ENCODE measurements at regions of chr11 and their contacts with region 1.

Region 1: DNA sequence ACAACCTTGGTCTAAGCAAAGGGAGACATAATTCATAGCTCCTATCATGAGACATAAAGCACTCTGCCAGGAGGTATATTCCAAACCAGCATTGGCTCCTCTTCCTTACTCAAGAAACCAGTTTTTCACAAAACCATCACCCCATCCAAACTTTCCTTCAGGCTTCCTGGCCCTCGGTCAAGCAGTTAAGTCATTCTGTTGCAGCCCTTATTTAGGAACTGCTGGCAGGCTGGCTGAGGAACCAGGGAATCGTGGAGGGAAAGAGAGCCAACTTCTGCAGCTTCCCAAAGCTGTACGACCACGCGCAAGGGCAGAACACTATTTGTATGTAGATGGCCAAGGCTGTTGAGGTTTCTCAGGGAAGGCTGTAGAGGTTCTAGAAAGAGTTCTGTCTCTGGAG is 680 bp downstream of the IFT46 start:
- DNase-seq: no peak
- H3K4me3 ChIP-seq: peak overlapping the region; percentile 35 to 58 (median 53)
- H3K27ac ChIP-seq: peak overlapping the region; percentile 80 to 85 (median 81)
- H3K4me1 ChIP-seq: peaks cover 0 to 18% (median 15%) of the 10 kb centered on the region in 4 donors
- H3K27me3 ChIP-seq: no peaks in the 10 kb centered on the region
- CTCF ChIP-seq: no peak
- EP300 ChIP-seq: no peak
- POLR2A ChIP-seq: no peak

Region 2: DNA sequence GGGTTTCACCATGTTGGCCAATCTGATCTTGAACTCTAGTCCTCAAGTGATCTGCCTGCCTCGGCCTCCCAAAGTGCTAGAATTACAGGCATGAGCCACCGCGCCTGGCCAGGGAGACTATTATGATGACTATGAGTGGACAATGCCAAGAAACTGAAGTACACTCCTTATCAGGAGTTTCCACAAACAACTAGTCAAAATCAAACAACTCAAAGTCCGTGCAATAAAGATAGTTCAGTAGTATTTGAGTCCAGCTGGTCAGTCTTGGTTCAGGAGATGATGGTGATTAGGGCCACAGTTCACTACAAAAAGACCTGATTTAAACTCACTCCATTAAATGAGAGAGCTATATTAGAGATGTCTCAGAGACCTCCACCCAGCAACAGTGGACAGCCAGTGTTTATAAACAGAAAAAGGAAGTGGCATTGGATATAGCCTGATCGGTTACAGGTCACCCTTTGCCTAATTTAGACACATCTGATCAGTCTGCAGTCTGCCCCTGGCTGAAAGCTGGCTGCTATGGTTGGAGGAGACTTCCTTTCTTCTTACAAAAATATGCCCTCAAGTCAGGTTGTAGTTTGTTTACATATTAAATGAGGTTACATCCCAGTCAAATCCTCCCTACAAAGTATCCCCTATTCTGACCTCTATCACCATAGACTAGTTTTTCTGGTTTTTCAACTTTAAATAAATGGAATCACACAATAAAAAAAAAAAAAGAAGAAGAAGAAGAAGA is 243.5 kb before region 1 on chr11:
- intact Hi-C with region 1: no loop called
- DNase-seq: no peak
- H3K4me3 ChIP-seq: no peak overlapping the region
- H3K27ac ChIP-seq: no peak overlapping the region
- H3K4me1 ChIP-seq: peaks cover 0 to 4% (median 2%) of the 10 kb centered on the region in 4 donors
- H3K27me3 ChIP-seq: peaks cover 0 to 13% (median 0%) of the 10 kb centered on the region in 3 donors
- CTCF ChIP-seq: no peak
- EP300 ChIP-seq: no peak
- POLR2A ChIP-seq: no peak

Region 3: DNA sequence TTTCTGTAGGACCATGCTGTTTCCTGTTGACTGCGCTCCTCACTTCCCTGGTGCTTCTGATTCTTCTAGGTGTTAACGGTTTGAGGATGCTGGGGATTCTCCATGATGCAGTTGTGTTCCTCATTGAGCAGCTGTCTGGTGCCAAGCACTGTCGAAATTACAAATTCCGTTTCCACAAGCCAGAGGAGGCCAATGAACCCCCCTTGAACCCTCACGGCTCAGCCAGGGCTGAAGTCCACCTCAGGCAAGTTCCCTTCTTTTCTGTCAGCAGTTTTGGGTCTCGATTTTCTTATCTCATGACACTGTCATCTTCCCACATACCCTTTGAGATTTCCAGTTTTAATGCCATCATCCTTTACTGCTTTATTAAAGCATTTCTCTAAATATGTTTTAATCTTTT is 45.5 kb before region 1 on chr11:
- intact Hi-C with region 1: no loop called
- DNase-seq: no peak
- H3K4me3 ChIP-seq: no peak overlapping the region
- H3K27ac ChIP-seq: no peak overlapping the region
- H3K4me1 ChIP-seq: peaks cover 0 to 6% (median 3%) of the 10 kb centered on the region in 4 donors
- H3K27me3 ChIP-seq: no peaks in the 10 kb centered on the region
- CTCF ChIP-seq: no peak
- EP300 ChIP-seq: no peak
- POLR2A ChIP-seq: no peak

Region 4: GRCh38 chr11:118531340-118532084 is 33.5 kb before region 1 on chr11:
- intact Hi-C with region 1: loop called (anchors 2 kb)
- DNase-seq: peak; percentile 69
- H3K4me3 ChIP-seq: peak overlapping the region; percentile 74 to 91 (median 77)
- H3K27ac ChIP-seq: peak overlapping the region; percentile 77 to 89 (median 83)
- H3K4me1 ChIP-seq: peaks cover 0 to 28% (median 20%) of the 10 kb centered on the region in 4 donors
- H3K27me3 ChIP-seq: no peaks in the 10 kb centered on the region
- CTCF ChIP-seq: no peak
- EP300 ChIP-seq: no peak
- POLR2A ChIP-seq: no peak

Region 5: DNA sequence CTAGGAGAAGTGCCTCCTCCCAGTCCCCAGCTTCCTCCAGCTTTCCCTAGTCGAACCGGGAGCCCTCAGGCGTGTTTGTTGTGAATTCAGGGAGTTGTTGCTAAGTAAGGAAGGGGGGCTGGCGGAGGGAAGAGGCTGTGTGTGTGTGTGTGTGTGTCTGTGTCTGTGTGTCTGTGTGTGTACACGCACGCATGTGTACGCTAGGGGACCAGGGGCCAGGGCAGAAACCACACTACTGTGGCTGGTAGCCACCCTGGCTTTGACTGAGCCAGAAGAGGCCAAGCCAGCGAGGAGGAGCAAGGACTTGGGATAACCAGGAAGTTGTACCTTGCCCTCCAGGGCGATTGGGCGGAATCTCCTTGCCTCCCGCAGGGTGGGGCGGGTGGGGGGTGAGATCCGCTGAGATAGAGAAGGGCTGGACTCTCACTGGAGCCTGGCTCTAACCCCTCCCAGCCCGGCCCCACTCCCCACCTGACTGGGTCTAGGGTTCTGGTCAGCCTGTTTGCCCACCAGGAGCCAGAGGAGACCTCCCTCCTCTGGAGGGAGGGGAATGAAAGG is 353.2 kb after region 1 on chr11:
- intact Hi-C with region 1: no loop called
- DNase-seq: peak; percentile 92
- H3K4me3 ChIP-seq: peak overlapping the region; percentile 19 to 92 (median 31)
- H3K27ac ChIP-seq: peak overlapping the region; percentile 95 to 100 (median 100)
- H3K4me1 ChIP-seq: peaks cover 0 to 100% (median 100%) of the 10 kb centered on the region in 4 donors
- H3K27me3 ChIP-seq: no peaks in the 10 kb centered on the region
- CTCF ChIP-seq: no peak
- EP300 ChIP-seq: no peak
- POLR2A ChIP-seq: no peak

Measured in sigmoid colon (tissue), 7 donors.